ENCODE measurements at regions of chr4 and their contacts with region 1.

Region 1: DNA sequence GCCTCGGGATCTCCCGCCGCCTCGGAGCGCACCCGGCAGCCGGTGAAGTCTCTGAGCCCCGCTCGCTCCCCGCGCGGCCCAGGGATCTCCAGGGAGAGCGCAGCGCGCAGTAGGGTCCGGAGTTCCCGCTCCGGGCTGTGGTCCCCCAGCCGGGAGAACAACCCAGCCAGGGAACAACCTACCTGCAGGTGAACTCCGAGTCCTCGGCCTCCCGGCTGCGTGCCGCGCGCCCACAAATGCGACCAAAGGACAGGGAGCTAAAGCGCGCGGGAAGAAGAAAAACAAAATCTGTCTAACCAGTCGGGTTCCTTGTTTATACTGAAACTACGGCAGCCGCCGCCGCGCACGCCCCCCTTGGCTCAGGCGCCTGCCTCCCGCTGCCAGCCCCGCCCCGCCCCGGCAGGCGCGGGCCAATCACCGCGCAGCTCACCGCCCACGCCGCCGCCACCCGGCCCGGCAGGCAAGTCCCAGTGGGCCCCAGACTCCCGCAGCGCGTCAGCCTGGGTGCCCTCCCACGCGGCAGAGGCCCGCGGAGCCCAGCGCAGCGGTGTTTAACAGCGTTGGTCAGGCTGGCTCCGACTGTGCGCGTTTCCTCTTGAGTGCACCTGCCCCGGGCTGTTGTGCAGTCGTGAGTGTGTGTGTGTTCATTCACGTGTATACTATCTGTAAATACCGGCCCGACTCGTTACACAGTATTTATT is at the start of gene RASGEF1B:
- DNase-seq: peak; percentile 96
- ATAC-seq: peak; percentile 85
- H3K4me3 Mint-ChIP-seq: peak within 1 kb of the TSS; percentile 89
- H3K27ac Mint-ChIP-seq: peak within 1 kb of the TSS; percentile 95
- H3K4me1 Mint-ChIP-seq: peaks cover 37% of the 10 kb centered on the region
- H3K27me3 Mint-ChIP-seq: no peaks in the 10 kb centered on the region
- CTCF ChIP-seq: no peak
- total RNA-seq, gene RASGEF1B: 6.1 to 6.2 TPM

Region 2: DNA sequence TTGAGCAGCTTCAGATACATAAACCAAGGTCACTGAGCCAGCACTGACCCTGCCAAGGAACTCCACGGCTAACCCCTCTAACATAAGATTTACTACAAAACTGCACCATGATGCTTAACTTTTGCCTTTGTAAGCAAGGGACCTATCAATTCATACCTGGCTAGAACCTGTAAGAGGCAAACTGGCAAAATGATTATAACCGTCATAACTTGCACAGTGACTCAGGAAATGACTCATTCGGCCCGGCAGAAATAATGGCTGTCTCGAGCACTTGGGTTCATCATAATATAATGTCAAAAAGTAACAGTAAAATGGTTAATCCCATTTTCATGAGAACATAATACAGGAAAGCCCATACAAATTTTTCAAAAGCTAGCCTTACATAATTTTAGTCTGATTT is 17.2 kb before region 1 on chr4:
- CTCF ChIA-PET with region 1: interaction called, 21 read pairs
- POLR2A ChIA-PET with region 1: no interaction called
- intact Hi-C with region 1: no loop called
- DNase-seq: peak; percentile 73
- ATAC-seq: peak; percentile 96
- H3K4me3 Mint-ChIP-seq: no peak overlapping the region
- H3K27ac Mint-ChIP-seq: peak overlapping the region; percentile 79
- H3K4me1 Mint-ChIP-seq: peaks cover 21% of the 10 kb centered on the region
- H3K27me3 Mint-ChIP-seq: no peaks in the 10 kb centered on the region
- CTCF ChIP-seq: no peak

Region 3: GRCh38 chr4:81505004-81505598 is 33.4 kb after region 1 on chr4:
- CTCF ChIA-PET with region 1: interaction called, 12 read pairs
- POLR2A ChIA-PET with region 1: interaction called, 6 read pairs
- intact Hi-C with region 1: loop called (anchors 5 kb)
- DNase-seq: peak; percentile 83
- ATAC-seq: peak; percentile 72
- H3K4me3 Mint-ChIP-seq: peak overlapping the region; percentile 45
- H3K27ac Mint-ChIP-seq: peak overlapping the region; percentile 65
- H3K4me1 Mint-ChIP-seq: peaks cover 50% of the 10 kb centered on the region
- H3K27me3 Mint-ChIP-seq: no peaks in the 10 kb centered on the region
- CTCF ChIP-seq: no peak

Region 4: DNA sequence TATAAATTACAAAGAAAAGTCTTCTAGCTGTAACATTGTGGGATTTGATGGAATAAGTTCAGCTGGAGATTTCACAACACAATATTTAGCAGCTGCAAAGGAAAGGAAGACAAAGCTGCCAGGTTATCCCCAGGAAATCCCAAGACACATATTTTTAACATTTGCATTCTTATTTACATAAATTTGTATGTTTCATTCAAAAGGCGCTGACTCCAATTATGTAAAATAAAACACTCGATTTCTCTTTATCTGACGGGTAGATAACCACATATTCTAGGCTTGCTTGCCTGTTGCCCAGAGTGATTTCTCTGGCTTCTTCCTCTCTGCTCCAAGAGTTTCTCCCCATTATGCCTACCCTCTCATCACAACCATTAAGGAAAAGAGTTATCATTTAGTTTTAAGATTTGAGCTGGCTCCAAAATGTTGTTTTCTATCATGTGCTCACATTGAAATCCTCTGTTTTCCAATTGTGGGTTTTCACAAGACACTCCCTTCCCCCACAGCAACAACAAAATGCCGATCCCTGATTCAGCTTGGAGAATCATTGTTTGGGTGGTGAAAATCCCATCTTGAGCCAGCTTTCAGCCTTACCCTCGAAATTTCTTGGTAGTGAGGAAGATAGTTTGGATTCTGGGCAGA is 128.1 kb after region 1 on chr4:
- CTCF ChIA-PET with region 1: interaction called, 13 read pairs
- POLR2A ChIA-PET with region 1: no interaction called
- intact Hi-C with region 1: loop called (anchors 10 kb)
- DNase-seq: no peak
- ATAC-seq: no peak
- H3K4me3 Mint-ChIP-seq: no peak overlapping the region
- H3K27ac Mint-ChIP-seq: no peak overlapping the region
- H3K4me1 Mint-ChIP-seq: peaks cover 6% of the 10 kb centered on the region
- H3K27me3 Mint-ChIP-seq: no peaks in the 10 kb centered on the region
- CTCF ChIP-seq: no peak

Region 5: GRCh38 chr4:81747242-81747930 is 275.6 kb after region 1 on chr4:
- CTCF ChIA-PET with region 1: interaction called, 3 read pairs
- POLR2A ChIA-PET with region 1: interaction called, 3 read pairs
- intact Hi-C with region 1: loop called (anchors 10 kb)
- DNase-seq: no peak
- ATAC-seq: no peak
- H3K4me3 Mint-ChIP-seq: no peak overlapping the region
- H3K27ac Mint-ChIP-seq: no peak overlapping the region
- H3K4me1 Mint-ChIP-seq: peaks cover 2% of the 10 kb centered on the region
- H3K27me3 Mint-ChIP-seq: no peaks in the 10 kb centered on the region
- CTCF ChIP-seq: no peak

Measured in activated CD8-positive, alpha-beta T cell treated with anti-CD3 and anti-CD28 coated beads for 36 hours (primary cell).